ENCODE measurements at regions of chr4 and their contacts with region 1.

Region 1: DNA sequence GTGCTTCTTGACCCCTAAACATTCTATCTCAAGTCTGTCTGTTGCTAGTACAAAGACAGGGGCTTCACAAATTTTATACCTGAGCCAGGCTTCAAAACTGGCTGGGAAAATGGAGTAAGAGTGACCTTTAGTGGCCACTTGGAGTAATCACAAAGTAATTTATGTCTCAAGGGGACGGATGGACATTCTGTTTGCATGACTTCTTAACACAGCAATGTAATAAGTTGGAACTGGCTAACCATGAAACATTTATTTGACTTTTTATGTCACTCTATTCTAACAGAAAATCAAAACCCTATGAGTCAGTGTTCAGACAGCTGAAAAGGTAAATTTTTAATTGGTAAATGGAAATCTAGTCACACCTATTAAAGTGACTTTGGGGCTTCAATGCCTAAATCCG is 600.6 kb downstream of the ANKRD50 start:
- DNase-seq: peak; percentile 23
- H3K4me3 ChIP-seq: no peak overlapping the region
- H3K27ac ChIP-seq: no peak overlapping the region
- H3K4me1 ChIP-seq: no peaks in the 10 kb centered on the region
- H3K27me3 ChIP-seq: no peaks in the 10 kb centered on the region
- CTCF ChIP-seq: peak; percentile 20 to 69 (median 50)
- POLR2A ChIP-seq: no peak

Region 2: DNA sequence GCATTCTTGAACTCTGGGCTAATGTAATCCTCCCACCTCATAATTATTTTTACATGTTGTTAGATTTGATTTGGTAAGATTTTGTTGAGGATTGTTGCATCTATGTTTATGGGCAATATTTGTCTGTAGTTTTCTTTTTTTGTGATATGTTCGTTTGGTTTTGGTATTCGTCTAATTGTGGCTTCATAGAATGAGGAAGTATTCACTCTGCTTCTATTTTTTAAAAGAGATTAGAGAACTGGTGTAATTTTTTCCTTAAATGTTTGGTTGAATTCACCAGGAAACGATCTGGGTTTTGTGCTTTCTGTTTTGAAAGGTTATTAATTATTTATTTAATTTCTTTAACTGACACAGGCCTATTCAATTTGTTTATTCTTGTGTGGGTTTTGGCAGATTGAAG is 1028.3 kb before region 1 on chr4:
- intact Hi-C with region 1: no loop called
- DNase-seq: no peak
- H3K4me3 ChIP-seq: no peak overlapping the region
- H3K27ac ChIP-seq: no peak overlapping the region
- H3K4me1 ChIP-seq: no peaks in the 10 kb centered on the region
- H3K27me3 ChIP-seq: no peaks in the 10 kb centered on the region
- CTCF ChIP-seq: no peak
- POLR2A ChIP-seq: no peak

Region 3: DNA sequence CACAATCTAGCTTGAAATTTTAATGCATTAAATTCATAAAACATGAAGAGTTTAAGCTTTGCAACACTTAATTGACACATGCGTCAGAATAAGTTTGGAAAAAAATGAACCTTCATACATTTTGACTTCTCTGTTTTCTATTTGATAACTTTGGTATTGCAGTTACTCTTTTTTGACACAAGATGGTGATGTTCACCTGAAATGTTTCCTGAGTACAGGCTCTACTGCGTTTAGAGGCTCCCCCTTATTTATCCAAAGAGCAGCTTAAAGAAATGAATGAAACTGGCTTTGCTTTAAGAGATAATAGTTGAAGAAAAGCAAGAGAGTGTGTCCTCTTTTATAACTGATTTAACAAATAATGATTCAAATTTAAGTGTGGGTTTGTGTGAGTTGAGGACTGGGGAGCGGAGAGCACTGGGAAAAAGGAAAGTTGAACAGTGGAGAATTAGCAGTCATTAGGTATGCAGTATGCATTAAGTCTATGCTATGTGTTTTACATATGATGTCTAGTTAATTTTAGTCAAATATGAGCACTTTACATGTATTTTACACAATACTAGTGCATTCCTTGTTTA is 1008.9 kb before region 1 on chr4:
- intact Hi-C with region 1: loop called (anchors 5 kb)
- DNase-seq: no peak
- H3K4me3 ChIP-seq: no peak overlapping the region
- H3K27ac ChIP-seq: no peak overlapping the region
- H3K4me1 ChIP-seq: no peaks in the 10 kb centered on the region
- H3K27me3 ChIP-seq: no peaks in the 10 kb centered on the region
- CTCF ChIP-seq: peak; percentile 58 to 81 (median 67)
- POLR2A ChIP-seq: no peak

Region 4: DNA sequence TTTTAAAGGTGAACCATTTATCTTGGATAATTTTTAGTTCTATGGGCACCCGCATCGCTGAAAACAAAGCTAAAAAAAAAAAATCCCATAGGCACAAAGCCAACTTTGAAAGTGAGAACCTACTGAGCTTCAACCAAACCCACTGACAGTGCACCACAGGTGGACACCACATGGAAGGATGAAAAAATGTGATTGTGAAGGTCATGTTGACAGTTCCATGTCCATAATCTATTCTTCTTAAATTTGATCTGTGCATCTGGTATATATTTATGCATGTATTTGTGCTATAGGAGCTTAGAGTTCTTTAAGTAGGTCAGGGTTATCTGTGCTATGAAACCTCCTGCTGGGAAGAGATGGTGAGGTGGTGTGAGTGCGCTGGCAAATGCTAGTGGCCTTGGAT is 341.0 kb before region 1 on chr4:
- intact Hi-C with region 1: loop called (anchors 5 kb)
- DNase-seq: no peak
- H3K4me3 ChIP-seq: no peak overlapping the region
- H3K27ac ChIP-seq: no peak overlapping the region
- H3K4me1 ChIP-seq: no peaks in the 10 kb centered on the region
- H3K27me3 ChIP-seq: no peaks in the 10 kb centered on the region
- CTCF ChIP-seq: no peak
- POLR2A ChIP-seq: no peak

Region 5: GRCh38 chr4:124224256-124224655 is 112.3 kb after region 1 on chr4:
- intact Hi-C with region 1: no loop called
- DNase-seq: no peak
- H3K4me3 ChIP-seq: no peak overlapping the region
- H3K27ac ChIP-seq: no peak overlapping the region
- H3K4me1 ChIP-seq: no peaks in the 10 kb centered on the region
- H3K27me3 ChIP-seq: no peaks in the 10 kb centered on the region
- CTCF ChIP-seq: no peak
- POLR2A ChIP-seq: no peak

Region 6: GRCh38 chr4:124253080-124253479 is 141.2 kb after region 1 on chr4:
- intact Hi-C with region 1: loop called (anchors 10 kb)
- DNase-seq: no peak
- H3K4me3 ChIP-seq: no peak overlapping the region
- H3K27ac ChIP-seq: no peak overlapping the region
- H3K4me1 ChIP-seq: no peaks in the 10 kb centered on the region
- H3K27me3 ChIP-seq: no peaks in the 10 kb centered on the region
- CTCF ChIP-seq: no peak
- POLR2A ChIP-seq: no peak